Motor neuron (in vitro differentiated cells): ENCODE measurements at regions of chr4 and their contacts with region 1.

Region 1: DNA sequence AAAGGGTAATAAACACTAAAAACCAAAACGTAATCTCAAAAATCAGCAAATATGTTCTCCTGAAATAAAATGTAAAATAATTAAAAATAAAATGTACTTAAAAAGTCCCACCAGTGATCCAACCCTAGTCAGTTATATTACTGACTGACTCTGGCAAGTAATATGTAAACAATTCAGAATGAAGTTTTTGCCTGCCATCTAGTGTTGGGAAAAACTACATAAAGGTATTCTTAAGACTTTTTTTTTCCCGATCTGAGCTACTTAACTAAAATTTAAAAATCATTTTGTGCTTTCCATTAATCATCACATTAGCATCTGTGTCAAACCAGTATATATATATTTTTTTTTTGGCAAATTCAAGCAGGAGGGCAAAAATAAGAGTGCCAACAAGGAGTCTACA is 24.0 kb downstream of the RCHY1 start:
- ATAC-seq: peak in 1 of 8 experiments; percentile 24
- H3K4me3 ChIP-seq: no peak overlapping the region
- H3K27ac ChIP-seq: no peak overlapping the region
- H3K4me1 ChIP-seq: no peaks in the 10 kb centered on the region

Region 2: GRCh38 chr4:74874753-74875367 is 615.3 kb before region 1 on chr4:
- in situ Hi-C with region 1: loop called in 1 of 9 experiments (anchors 25 kb)
- ATAC-seq: peak; percentile 78 to 95 (median 90)
- H3K4me3 ChIP-seq: no peak overlapping the region
- H3K27ac ChIP-seq: no peak overlapping the region
- H3K4me1 ChIP-seq: peaks cover 0 to 5% of the 10 kb centered on the region in 2 donors

Region 3: DNA sequence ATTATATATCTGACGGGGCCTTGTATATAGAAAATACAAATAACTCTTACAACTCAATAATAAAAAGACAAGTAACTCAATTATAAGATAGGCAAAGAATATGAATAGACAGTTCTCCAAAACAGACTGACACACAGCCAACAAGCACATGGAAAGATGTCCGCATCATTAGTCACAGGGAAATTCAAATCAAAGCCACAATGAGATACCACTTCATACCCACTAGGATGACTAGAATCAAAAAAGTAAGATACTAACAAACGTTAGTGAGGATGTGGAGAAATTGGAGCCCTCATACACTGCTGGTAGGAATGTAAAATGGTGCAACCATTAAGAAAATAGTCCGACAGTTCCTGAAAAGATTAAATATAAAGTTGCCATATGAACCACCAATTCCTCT is 91.7 kb before region 1 on chr4:
- in situ Hi-C with region 1: no loop called
- ATAC-seq: no peak
- H3K4me3 ChIP-seq: no peak overlapping the region
- H3K27ac ChIP-seq: no peak overlapping the region
- H3K4me1 ChIP-seq: no peaks in the 10 kb centered on the region